Aorta (tissue), 5 donors: ENCODE measurements at regions of chr11 and their contacts with region 1.

Region 1: GRCh38 chr11:24206030-24206429 is 290.8 kb upstream of the LUZP2 start:
- DNase-seq: no peak
- ATAC-seq: no peak
- H3K4me3 ChIP-seq: no peak overlapping the region
- H3K27ac ChIP-seq: no peak overlapping the region
- H3K4me1 ChIP-seq: no peaks in the 10 kb centered on the region
- H3K27me3 ChIP-seq: no peaks in the 10 kb centered on the region

Region 2: DNA sequence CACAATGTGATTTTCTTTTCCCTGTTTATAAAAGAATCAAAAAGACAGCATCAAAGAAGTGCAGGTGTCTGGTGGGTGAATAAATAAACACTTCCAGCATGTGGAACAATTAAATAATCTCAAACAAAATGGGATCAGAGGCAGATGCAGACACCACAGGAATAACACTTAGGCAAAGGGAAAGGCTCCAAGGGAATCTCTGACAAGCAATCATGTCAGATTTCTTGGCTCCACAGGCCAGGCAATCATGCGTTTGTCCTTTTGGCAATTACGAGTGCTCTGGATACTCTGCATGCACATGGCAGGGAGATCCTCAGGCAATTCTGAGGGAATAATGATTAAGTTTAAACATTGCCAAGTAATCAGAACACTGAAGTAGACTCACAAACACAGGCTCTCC is 112.7 kb before region 1 on chr11:
- intact Hi-C with region 1: no loop called
- DNase-seq: no peak
- ATAC-seq: no peak
- H3K4me3 ChIP-seq: no peak overlapping the region
- H3K27ac ChIP-seq: no peak overlapping the region
- H3K4me1 ChIP-seq: no peaks in the 10 kb centered on the region
- H3K27me3 ChIP-seq: no peaks in the 10 kb centered on the region

Region 3: DNA sequence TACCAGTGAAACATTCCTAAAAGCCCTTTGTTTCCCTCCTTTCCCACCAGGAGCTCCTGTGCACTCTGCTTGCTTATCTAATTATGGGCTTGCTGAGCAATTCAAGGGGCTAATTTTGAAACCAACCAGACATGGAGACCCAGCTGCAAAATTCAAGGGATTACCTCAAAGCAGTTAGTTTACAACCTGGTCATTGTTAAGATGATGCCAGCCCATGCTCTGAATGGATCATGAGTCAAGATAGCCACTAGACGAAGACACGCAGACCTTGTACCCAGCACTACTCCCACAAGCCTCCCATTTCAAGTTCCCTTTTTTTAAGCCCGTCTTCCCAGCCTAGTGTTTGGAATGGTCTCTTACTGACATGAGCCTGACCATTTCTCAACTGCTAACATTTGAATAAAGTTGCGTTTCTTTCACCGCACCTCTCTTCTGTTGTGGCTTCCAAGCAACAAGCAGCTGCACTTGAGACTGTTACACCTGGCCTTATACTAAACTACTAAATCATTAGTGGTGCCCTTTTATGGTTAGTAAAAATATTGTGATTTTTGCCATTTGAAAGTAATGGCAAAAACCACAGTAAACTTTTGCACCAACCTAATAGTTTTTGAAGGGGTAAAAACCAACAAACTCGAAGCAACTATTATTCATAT is 24.5 kb before region 1 on chr11:
- intact Hi-C with region 1: no loop called
- DNase-seq: no peak
- ATAC-seq: no peak
- H3K4me3 ChIP-seq: no peak overlapping the region
- H3K27ac ChIP-seq: no peak overlapping the region
- H3K4me1 ChIP-seq: no peaks in the 10 kb centered on the region
- H3K27me3 ChIP-seq: no peaks in the 10 kb centered on the region

Region 4: GRCh38 chr11:24233041-24233440 is 27.0 kb after region 1 on chr11:
- intact Hi-C with region 1: loop called in 1 of 2 experiments (anchors 1 kb)
- DNase-seq: no peak
- ATAC-seq: no peak
- H3K4me3 ChIP-seq: no peak overlapping the region
- H3K27ac ChIP-seq: no peak overlapping the region
- H3K4me1 ChIP-seq: no peaks in the 10 kb centered on the region
- H3K27me3 ChIP-seq: no peaks in the 10 kb centered on the region